MCF 10A (cell line): ENCODE measurements at regions of chr14 and their contacts with region 1.

Region 1: GRCh38 chr14:22589096-22589839 is at the start of gene DAD1:
- DNase-seq: peak; percentile 99
- H3K4me3 Mint-ChIP-seq: peak within 1 kb of the TSS; percentile 92
- H3K27ac Mint-ChIP-seq: peak within 1 kb of the TSS; percentile 96
- H3K4me1 Mint-ChIP-seq: peaks cover 21% of the 10 kb centered on the region
- H3K27me3 Mint-ChIP-seq: peaks cover 25% of the 10 kb centered on the region
- CTCF ChIP-seq: no peak
- total RNA-seq, gene DAD1: 166 and 210 TPM in 2 replicates

Region 2: DNA sequence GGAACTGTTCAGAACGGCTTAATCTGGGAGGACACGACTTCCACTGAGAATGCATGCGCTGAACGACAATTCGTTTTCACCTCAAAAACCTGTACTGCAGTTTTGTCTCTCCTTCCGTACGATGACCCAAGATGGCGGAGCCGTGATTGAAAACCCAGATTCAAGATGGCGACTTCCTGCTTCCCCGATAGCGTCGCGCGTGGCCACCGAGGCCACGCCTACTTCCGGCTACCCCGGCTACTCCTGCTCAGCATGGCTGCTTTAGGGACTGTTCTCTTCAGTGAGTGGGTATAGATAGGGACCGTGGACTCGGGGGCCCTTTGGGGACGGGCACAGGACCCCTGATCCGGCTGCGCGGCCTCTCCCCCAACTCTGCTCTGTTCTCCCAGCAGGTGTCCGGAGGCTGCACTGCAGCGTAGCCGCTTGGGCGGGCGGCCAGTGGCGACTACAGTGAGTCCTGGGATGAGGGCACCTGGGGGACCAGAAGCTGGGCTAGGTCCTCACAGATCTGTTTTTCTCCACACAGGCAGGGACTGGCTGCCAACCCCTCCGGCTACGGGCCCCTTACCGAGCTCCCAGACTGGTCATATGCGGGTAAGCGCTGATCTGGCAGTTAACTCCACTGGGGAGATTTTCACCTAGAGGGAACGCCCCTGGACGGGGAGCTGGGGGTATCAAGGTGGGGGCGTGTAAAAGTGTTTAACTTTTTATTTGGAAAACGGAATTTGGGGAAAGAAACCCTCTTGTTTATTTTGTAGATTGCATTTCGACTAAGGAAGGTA is 240.6 kb after region 1 on chr14 and contains the start of gene MRPL52:
- CTCF ChIA-PET with region 1: interaction called, 4 read pairs
- POLR2A ChIA-PET with region 1: interaction called, 13 read pairs
- intact Hi-C with region 1: no loop called
- DNase-seq: peak; percentile 88
- H3K4me3 Mint-ChIP-seq: peak within 1 kb of the TSS; percentile 95
- H3K27ac Mint-ChIP-seq: peak within 1 kb of the TSS; percentile 76
- H3K4me1 Mint-ChIP-seq: peaks cover 9% of the 10 kb centered on the region
- H3K27me3 Mint-ChIP-seq: no peaks in the 10 kb centered on the region
- CTCF ChIP-seq: no peak
- total RNA-seq, gene MRPL52: 172 and 186 TPM in 2 replicates